ENCODE measurements at regions of chr3 and their contacts with region 1.

Region 1: DNA sequence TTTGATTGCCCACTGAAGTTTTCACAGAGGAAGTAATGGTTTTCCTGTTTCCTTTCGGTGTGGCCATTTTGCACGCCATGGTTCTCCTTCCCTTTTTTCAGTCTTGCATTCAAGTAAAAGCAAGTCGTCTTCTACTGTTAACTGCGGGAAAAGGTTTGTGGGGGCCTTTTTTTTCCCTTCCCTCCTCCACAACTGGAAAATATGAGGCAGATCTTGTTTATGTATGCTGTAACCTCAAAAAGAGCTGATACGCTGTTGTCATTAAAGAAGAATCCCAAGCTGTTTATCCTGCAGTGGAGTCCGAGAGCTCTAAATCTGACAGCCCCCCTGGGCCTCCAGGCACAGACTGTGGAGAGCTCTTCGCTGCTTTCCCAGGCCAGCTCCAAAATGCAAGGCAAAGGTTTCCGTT is 40.4 kb downstream of the FILIP1L start:
- DNase-seq: no peak
- H3K4me3 Mint-ChIP-seq: peak overlapping the region; percentile 62
- H3K27ac Mint-ChIP-seq: peak overlapping the region; percentile 91
- H3K4me1 Mint-ChIP-seq: peaks cover 68% of the 10 kb centered on the region
- H3K27me3 Mint-ChIP-seq: no peaks in the 10 kb centered on the region

Region 2: DNA sequence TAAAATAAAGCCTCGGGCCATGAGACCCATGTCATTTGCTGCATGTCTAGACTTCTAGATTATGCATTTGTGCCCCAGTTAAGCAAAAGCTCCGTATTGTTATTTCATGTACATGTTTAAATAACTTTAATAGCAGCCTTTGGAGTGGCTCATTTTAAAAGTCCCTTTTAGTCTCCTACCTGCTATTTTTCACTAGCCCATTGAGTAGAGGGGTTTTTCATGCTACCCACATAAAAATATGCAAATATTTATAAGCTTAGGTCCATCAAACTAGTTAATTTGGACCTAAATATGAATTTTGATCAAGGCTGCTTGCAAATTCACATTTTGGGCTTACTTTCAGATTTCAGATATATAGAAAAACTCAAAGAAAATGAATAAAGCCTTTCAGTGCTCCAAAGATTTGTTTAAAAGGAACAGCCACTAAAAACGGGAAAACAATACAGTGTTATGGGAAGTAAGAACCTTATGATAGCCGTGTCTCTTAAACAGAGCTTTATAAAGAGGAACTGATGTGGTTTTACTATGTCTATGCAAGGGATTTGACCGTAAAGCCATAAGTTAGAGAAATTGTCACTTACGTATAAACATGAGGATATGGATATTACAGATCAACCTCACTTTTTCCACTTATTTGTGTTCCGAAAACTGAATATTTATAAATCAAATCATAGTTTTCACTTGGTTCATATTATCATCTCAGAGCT is 10.3 kb after region 1 on chr3:
- CTCF ChIA-PET with region 1: interaction called, 40 read pairs
- POLR2A ChIA-PET with region 1: interaction called, 21 read pairs
- DNase-seq: no peak
- H3K4me3 Mint-ChIP-seq: no peak overlapping the region
- H3K27ac Mint-ChIP-seq: no peak overlapping the region
- H3K4me1 Mint-ChIP-seq: peaks cover 37% of the 10 kb centered on the region
- H3K27me3 Mint-ChIP-seq: peaks cover 4% of the 10 kb centered on the region

Region 3: GRCh38 chr3:100089812-100090668 is 16.1 kb after region 1 on chr3:
- CTCF ChIA-PET with region 1: interaction called, 40 read pairs
- POLR2A ChIA-PET with region 1: interaction called, 21 read pairs
- DNase-seq: peak; percentile 51
- H3K4me3 Mint-ChIP-seq: no peak overlapping the region
- H3K27ac Mint-ChIP-seq: no peak overlapping the region
- H3K4me1 Mint-ChIP-seq: peaks cover 40% of the 10 kb centered on the region
- H3K27me3 Mint-ChIP-seq: peaks cover 4% of the 10 kb centered on the region

Region 4: DNA sequence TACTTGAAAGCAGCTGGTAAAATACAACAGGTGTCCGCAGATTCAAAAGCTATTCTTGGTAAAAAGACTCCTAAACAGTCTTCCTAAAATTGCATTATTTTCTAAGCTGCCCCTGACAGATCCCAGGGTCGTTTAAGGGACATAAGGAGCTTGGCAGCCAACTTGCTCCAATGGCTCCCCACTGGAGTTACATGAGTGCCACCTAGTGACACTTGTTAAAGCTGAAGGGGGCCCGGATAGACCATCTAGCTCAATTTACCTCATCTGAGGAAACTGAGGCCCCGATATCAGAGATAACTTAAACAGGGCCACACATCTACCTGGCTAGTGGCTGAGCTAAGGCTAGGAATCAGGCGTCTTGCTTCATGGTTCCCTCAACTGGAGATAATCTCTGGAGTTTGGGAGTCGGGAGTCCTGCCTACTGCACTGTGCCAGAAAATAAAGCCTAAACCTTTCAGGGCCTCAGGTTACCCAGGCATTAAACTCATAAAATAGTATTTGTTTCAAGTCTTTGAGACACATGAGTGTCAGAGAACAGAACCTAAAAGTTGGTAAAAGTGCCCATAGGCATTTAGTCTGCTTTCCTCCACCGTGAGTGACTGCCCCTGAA is 180.4 kb after region 1 on chr3:
- CTCF ChIA-PET with region 1: interaction called, 91 read pairs
- POLR2A ChIA-PET with region 1: interaction called, 11 read pairs
- DNase-seq: peak; percentile 56
- H3K4me3 Mint-ChIP-seq: no peak overlapping the region
- H3K27ac Mint-ChIP-seq: no peak overlapping the region
- H3K4me1 Mint-ChIP-seq: no peaks in the 10 kb centered on the region
- H3K27me3 Mint-ChIP-seq: no peaks in the 10 kb centered on the region

Region 5: DNA sequence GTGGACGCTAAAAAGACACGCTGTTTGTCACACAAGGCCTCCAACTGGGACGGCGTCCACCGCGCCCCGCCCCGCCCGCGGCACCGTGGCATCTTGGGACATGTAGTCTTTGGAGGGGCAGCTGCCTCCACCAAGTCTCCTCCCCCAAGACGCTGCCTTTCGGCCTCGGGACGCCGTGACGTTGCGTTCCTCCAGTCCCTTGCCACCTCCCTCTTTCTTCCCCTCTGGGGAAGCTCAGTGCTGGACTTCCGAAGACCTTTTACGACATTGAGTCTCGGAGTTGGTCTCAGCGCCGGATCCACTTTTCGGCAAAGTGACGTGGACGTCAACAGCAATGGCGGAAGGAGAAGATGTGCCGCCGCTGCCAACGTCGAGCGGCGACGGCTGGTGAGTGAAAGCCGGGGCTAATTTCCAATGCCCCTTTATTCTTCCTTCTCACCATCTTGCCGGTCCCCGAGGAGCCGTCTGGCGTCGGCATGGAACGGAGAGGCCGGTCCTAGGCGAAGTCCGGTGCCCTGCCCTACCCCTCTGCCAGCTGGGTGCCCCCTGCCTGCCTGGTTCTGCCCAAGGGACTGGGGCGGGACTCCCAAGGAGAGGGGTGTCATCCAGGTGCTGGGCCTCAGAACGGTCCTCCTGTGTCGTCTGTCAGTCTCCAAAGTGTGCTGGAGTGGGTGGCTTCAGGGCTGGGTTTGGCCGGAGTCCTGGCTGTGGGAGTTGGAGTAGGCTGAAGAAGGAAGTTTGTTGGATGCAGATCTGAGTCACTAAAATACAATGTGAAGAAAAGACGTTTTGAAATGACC is 187.0 kb after region 1 on chr3 and contains the start of gene TBC1D23:
- CTCF ChIA-PET with region 1: interaction called, 91 read pairs
- POLR2A ChIA-PET with region 1: interaction called, 10 read pairs
- DNase-seq: peak; percentile 98
- H3K4me3 Mint-ChIP-seq: peak within 1 kb of the TSS; percentile 96
- H3K27ac Mint-ChIP-seq: peak within 1 kb of the TSS; percentile 84
- H3K4me1 Mint-ChIP-seq: peaks cover 42% of the 10 kb centered on the region
- H3K27me3 Mint-ChIP-seq: no peaks in the 10 kb centered on the region
- total RNA-seq, gene TBC1D23: 26.5 to 29.3 TPM

Measured in activated CD4-positive, alpha-beta memory T cell treated with anti-CD3 and anti-CD28 coated beads, Interleukin-2, amount 10 ng/mL, durations not matched to agents 7 days and 5 days (primary cell).